AG04449 (cell line): ENCODE measurements at regions of chr1 and their contacts with region 1.

Region 1: DNA sequence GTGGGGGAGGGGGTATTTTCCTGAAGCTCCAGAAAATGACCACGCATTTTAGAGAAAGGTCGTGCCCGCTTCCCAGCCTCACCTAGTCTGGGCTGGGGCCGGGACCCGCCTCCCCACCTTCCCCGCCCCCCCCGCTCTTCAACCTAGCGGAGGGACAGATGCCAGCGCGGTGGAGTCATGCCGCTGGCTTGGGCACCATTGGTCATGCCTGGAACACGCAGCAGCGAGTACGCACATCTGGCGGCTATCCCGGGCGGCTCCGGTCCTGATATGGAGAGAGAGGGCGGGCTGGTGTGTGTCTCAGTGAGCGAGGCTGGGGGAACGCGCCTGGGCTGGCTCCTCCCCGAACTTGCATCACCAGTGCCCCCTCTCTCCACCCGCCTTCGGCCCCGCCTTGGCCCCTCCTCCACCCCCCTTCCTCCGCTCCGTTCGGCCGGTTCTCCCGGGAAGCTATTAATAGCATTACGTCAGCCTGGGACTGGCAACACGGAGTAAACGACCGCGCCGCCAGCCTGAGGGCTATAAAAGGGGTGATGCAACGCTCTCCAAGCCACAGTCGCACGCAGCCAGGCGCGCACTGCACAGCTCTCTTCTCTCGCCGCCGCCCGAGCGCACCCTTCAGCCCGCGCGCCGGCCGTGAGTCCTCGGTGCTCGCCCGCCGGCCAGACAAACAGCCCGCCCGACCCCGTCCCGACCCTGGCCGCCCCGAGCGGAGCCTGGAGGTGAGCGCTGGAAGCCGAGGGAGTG is at the start of gene ATF3:
- DNase-seq: peak; percentile 97
- H3K4me3 ChIP-seq: peak within 1 kb of the TSS; percentile 82
- CTCF ChIP-seq: no peak

Region 2: DNA sequence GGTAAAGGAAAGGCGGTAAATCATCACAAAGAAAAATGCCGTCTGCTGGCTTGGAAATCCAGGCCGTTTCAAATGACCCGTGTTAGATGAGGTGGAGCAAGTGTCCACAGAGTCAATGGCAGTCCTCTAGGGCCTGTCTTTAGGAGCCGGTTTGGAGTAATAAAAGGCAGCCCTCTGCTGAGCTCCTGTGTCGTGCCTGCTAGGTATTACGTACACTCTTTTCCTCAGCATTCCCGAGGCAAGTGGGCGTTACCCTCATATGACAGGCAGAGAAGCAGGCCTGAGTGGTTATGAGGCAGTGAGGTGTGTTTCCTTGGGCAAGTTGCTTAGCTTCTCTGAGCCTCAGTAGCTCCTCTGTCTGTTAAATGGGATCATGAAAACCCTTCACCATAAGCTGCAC is 168.0 kb before region 1 on chr1:
- CTCF ChIA-PET with region 1: no interaction called
- POLR2A ChIA-PET with region 1: no interaction called
- DNase-seq: no peak
- H3K4me3 ChIP-seq: no peak overlapping the region
- CTCF ChIP-seq: no peak

Region 3: GRCh38 chr1:212558693-212559480 is 49.5 kb before region 1 on chr1:
- CTCF ChIA-PET with region 1: no interaction called
- POLR2A ChIA-PET with region 1: interaction called, 12 read pairs
- DNase-seq: peak; percentile 54
- H3K4me3 ChIP-seq: peak overlapping the region; percentile 66
- CTCF ChIP-seq: no peak

Region 4: GRCh38 chr1:212595787-212596714 is 12.3 kb before region 1 on chr1:
- CTCF ChIA-PET with region 1: interaction called, 9 read pairs
- POLR2A ChIA-PET with region 1: interaction called, 23 read pairs
- DNase-seq: peak; percentile 75
- H3K4me3 ChIP-seq: peak overlapping the region; percentile 34
- CTCF ChIP-seq: peak; percentile 32

Region 5: GRCh38 chr1:212618501-212619405 is 10.4 kb after region 1 on chr1:
- CTCF ChIA-PET with region 1: interaction called, 4 read pairs
- POLR2A ChIA-PET with region 1: interaction called, 42 read pairs
- DNase-seq: no peak
- H3K4me3 ChIP-seq: no peak overlapping the region
- CTCF ChIP-seq: no peak

Region 6: GRCh38 chr1:212638492-212639151 is 30.2 kb after region 1 on chr1:
- CTCF ChIA-PET with region 1: interaction called, 3 read pairs
- POLR2A ChIA-PET with region 1: interaction called, 10 read pairs
- DNase-seq: peak; percentile 65
- H3K4me3 ChIP-seq: no peak overlapping the region; the same call in none of the 2 replicates
- CTCF ChIP-seq: no peak

Region 7: GRCh38 chr1:212791676-212792395 is 183.5 kb after region 1 on chr1 and contains the starts of genes NSL1 and TATDN3:
- CTCF ChIA-PET with region 1: no interaction called
- POLR2A ChIA-PET with region 1: interaction called, 10 read pairs
- DNase-seq: no peak
- H3K4me3 ChIP-seq: peak within 1 kb of the TSS; percentile 95
- CTCF ChIP-seq: no peak